ENCODE measurements at regions of chr4 and their contacts with region 1.

Region 1: DNA sequence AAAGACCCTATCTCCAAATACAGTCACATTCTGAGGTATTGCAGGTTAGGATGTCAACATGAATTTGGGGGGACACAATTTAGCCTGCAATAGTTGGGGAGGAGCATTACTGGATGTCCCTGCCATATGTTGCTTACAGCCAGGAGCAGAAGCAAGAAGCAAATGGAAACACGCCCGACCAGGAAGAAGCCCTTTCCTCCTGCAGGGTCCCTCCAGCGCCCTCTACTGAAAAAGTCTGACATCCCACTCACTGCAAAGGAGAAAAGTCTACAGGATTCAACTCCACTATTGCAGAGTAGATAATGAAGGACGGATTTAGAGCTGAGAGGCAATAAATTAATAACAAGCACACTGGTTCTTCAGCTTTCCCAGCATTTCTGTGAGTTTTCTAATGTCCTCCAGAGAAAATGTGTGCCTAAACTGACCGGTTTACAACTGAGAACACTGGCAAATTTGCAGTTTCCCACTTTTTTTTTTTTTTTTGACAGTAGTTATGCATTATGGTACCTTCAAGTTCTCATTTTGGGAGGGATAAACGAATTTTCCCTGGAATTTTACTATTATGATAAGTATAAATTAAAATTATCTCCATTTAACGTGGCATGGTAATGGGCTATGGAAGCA is 31.7 kb downstream of the COQ2 start:
- DNase-seq: peak; percentile 38 to 88 (median 72)
- ATAC-seq: peak; percentile 75 to 94 (median 88)
- H3K4me3 ChIP-seq: no peak overlapping the region
- H3K4me3 Mint-ChIP-seq: peak overlapping the region in 1 of 3 donors; percentile 8
- H3K27ac ChIP-seq: no peak overlapping the region
- H3K27ac Mint-ChIP-seq: peak overlapping the region; percentile 65 to 71
- H3K4me1 ChIP-seq: peaks cover 12 to 19% of the 10 kb centered on the region in 2 experiments
- H3K4me1 Mint-ChIP-seq: peaks cover 22 to 30% (median 29%) of the 10 kb centered on the region in 3 donors
- H3K27me3 ChIP-seq: no peaks in the 10 kb centered on the region
- H3K27me3 Mint-ChIP-seq: no peaks in the 10 kb centered on the region

Region 2: GRCh38 chr4:83212041-83212851 is 40.6 kb before region 1 on chr4:
- CTCF ChIA-PET with region 1: interaction called, 3 to 14 read pairs
- POLR2A ChIA-PET with region 1: interaction called, 5 to 9 read pairs
- DNase-seq: peak; percentile 22 to 88 (median 70)
- ATAC-seq: peak; percentile 93 to 96 (median 94)
- H3K4me3 ChIP-seq: no peak overlapping the region
- H3K4me3 Mint-ChIP-seq: peak overlapping the region; percentile 26 to 71 (median 38)
- H3K27ac ChIP-seq: peak overlapping the region; percentile 82
- H3K27ac Mint-ChIP-seq: peak overlapping the region; percentile 89 to 90
- H3K4me1 ChIP-seq: peaks cover 54 to 61% of the 10 kb centered on the region in 2 experiments
- H3K4me1 Mint-ChIP-seq: peaks cover 72 to 86% (median 80%) of the 10 kb centered on the region in 3 donors
- H3K27me3 ChIP-seq: no peaks in the 10 kb centered on the region
- H3K27me3 Mint-ChIP-seq: no peaks in the 10 kb centered on the region

Measured in T-cell (primary cell).